ENCODE measurements at regions of chr4 and their contacts with region 1.

Region 1: DNA sequence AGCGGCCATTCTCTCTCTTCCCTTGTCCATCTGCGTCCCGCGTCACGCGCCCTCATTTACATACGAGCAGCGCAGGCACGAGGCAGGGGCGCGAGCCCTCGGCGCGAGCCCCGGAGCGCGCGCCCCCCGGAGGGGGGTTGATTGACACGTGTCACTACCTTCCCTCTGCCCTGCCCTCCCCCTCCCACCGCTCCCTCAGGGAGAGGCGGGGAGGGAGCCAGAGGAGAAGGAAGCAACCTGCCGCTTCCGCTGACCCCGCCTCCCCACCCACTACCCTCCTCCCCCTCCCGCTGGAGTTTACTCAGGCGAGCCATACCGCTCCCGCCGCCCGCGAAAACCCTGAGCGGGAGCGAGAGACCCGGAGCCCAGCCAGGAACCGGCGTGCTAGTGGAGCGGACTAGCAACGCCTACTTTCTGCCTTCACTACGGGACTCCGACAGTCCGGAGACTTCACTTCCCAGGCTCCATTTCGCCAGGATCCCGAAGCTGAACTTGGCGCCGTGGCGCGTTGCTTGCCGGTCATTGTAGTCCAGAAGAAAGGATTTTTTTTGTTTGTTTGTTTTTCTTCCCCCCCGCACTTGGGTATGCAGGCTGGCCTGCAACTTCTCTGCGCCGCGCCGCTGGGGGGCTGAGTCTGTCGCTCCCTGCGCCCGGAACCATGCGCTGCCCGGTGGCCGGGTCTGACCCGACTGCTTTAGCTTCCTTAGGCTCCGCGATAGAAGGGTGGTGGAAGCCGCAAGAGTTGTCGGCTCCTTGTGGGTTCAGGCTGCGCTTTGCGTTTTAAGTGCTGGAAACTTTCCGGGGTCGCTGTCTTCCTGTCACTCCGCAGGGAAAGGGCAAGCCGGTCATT is at the start of gene LCORL:
- DNase-seq: peak; percentile 83
- H3K4me3 Mint-ChIP-seq: peak within 1 kb of the TSS; percentile 92
- H3K27ac Mint-ChIP-seq: peak within 1 kb of the TSS; percentile 84
- H3K4me1 Mint-ChIP-seq: peaks cover 14% of the 10 kb centered on the region
- H3K27me3 Mint-ChIP-seq: peaks cover 57% of the 10 kb centered on the region
- total RNA-seq, gene LCORL: 9.5 and 12.8 TPM in 2 replicates

Region 2: GRCh38 chr4:17614416-17615299 is 407.3 kb before region 1 on chr4 and contains the start of gene MED28:
- intact Hi-C with region 1: loop called (anchors 1 kb)
- DNase-seq: peak; percentile 92
- H3K4me3 Mint-ChIP-seq: peak within 1 kb of the TSS; percentile 90
- H3K27ac Mint-ChIP-seq: peak within 1 kb of the TSS; percentile 91
- H3K4me1 Mint-ChIP-seq: peaks cover 24% of the 10 kb centered on the region
- H3K27me3 Mint-ChIP-seq: no peaks in the 10 kb centered on the region
- total RNA-seq, gene MED28: 53.2 and 55.7 TPM in 2 replicates

Region 3: DNA sequence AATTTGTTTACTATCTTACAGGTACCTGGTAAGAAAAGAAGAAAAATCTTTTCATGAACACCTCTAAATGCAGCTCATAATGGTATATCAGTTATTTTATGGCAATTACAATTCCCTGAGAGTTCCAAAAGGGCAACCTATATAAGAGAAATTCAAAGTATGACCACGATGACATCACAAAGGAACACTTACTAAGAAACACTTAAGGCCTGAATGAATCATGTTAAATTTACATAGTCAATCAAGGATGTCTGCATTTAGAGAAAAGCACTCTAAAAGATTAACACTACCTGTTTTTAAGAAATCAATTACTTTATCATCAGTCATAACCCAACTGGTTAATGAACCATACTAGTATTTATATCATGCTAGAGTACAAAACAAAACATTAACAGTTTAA is 64.3 kb before region 1 on chr4:
- intact Hi-C with region 1: loop called (anchors 1 kb)
- DNase-seq: no peak
- H3K4me3 Mint-ChIP-seq: no peak overlapping the region
- H3K27ac Mint-ChIP-seq: no peak overlapping the region
- H3K4me1 Mint-ChIP-seq: peaks cover 24% of the 10 kb centered on the region
- H3K27me3 Mint-ChIP-seq: no peaks in the 10 kb centered on the region

Region 4: DNA sequence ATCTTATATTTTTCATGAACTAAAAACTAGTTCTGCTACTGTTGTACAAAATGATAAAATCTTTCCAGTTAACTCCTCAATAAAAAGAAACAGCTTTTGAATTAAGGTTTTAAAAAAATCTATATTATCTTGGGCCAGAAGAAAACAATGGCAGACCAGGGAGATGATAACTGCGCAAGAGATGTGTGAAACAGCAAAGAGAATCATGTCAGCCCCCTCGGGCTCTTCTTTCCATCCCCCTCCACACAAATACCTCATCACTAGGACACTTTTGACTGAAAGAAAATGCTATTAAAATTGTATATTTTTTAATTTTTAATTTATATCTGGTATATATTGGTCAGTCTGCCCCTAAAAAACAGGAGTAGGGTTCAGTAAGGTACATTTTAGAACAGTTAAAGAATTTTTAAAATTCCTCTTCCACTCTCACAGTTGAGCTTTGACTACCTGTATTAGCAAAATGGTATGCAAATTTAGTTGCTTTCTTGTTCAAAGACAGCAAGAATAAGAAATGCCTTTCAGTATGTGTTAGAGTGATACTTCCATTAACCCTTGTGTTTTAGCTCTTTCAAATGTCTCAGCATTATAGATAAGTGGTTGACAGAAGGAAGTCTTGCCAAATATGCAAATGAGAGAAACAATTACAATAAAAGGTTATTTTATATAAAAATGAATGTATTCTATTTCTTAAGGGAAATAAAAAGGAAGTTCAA is 36.0 kb after region 1 on chr4:
- intact Hi-C with region 1: loop called (anchors 2 kb)
- DNase-seq: no peak
- H3K4me3 Mint-ChIP-seq: no peak overlapping the region
- H3K27ac Mint-ChIP-seq: no peak overlapping the region
- H3K4me1 Mint-ChIP-seq: peaks cover 14% of the 10 kb centered on the region
- H3K27me3 Mint-ChIP-seq: peaks cover 35% of the 10 kb centered on the region

Measured in activated T-helper 2 cell treated with anti-CD3 and anti-CD28 coated beads, Interferon-gamma antibody, Interleukin-2, Interleukin-4, amounts not matched to agents 10 μg/mL and 5 μg/mL and 100 μg/mL, durations not matched to agents 14 hours and 24 hours and 36 hours (primary cell).